HCT116 (cell line): ENCODE measurements at regions of chr14 and their contacts with region 1.

Region 1: DNA sequence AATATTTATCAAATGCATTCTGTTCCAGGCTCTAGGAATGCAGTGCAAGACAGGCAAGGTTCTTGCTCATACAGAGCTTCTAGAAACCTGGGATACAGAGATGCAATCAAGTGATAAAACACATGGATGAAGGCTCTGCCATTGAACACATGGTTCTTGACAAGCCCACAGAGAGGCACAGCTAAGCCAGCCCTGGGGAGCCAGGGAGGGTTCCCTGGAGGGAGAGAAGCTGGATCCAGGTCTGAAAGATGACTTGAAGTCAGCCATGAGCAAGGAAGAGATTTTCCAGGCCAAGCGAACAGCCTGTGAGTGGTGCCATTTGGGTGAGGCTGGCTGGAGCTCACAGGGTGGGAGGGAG is 66.2 kb downstream of the IRF2BPL start:
- DNase-seq: no peak
- ATAC-seq: peak; percentile 12
- H3K4me3 ChIP-seq: peak overlapping the region; percentile 12 to 45
- H3K27ac ChIP-seq: peak overlapping the region; percentile 100
- H3K4me1 ChIP-seq: peaks cover 81 to 87% of the 10 kb centered on the region in 2 experiments
- H3K27me3 ChIP-seq: no peaks in the 10 kb centered on the region
- CTCF ChIP-seq: no peak
- POLR2A ChIP-seq: no peak
- RAD21 ChIP-seq: no peak

Region 2: GRCh38 chr14:76947078-76947837 is 15.0 kb before region 1 on chr14:
- CTCF ChIA-PET with region 1: interaction called, 3 read pairs
- POLR2A ChIA-PET with region 1: interaction called, 30 read pairs
- RAD21 ChIA-PET with region 1: interaction called, 6 to 8 read pairs
- intact Hi-C with region 1: no loop called
- DNase-seq: peak; percentile 87
- ATAC-seq: peak; percentile 88
- H3K4me3 ChIP-seq: peak overlapping the region in 1 of 2 experiments; percentile 35; a peak in 2 of 4 replicates
- H3K27ac ChIP-seq: peak overlapping the region; percentile 97
- H3K4me1 ChIP-seq: peaks cover 67 to 76% of the 10 kb centered on the region in 2 experiments
- H3K27me3 ChIP-seq: no peaks in the 10 kb centered on the region
- CTCF ChIP-seq: peak in 2 of 3 experiments; percentile 42 to 51; a peak in 4 of 6 replicates
- POLR2A ChIP-seq: no peak
- RAD21 ChIP-seq: no peak

Region 3: DNA sequence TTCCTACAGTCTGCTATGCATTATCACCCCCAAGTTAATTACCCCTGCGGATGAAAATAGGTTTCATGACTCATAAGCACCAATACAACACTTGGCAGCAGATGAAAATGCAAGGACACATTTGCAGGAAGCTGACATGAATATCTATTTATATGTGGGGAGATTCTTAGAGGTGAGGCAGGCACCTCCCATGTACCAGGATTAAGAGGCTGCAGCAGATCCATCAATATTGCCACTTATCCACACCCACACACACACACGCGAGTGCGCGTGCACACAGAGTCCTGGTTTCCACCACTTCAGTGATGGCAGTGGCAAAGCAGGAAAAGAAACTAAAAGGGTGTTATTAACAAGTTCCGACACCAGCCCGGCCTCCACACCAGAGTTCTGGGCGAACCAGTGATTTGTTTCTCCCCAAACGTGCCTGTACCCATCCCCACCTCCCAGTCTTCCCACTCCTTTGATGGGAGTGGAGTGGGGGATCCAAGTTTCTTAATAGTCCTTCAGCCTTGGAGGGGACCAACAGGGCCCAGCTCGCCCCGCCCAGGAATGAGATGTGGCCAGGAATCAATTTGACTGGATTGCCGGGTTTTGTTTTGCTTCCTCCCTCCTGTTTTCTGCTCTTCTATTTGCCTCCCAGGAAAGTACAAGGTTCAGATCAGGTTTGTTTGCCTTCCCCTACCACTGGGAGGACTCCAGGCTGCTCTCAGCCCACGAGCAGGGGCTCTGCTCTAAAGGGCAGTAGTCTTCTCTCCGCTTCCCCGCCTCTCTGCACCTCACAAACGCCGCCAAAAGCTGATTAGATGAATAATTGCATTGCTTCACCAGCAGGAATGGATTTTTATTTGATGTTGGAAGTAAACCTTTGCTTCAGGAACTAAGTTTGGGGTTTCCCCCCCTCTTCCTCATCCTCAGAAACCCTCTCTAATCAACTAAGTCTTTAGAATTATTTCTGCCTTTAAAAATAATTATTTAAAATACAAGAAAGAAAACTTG is 61.0 kb after region 1 on chr14:
- CTCF ChIA-PET with region 1: interaction called, 8 read pairs
- POLR2A ChIA-PET with region 1: interaction called, 14 read pairs
- RAD21 ChIA-PET with region 1: interaction called, 7 read pairs
- intact Hi-C with region 1: loop called (anchors 2 kb)
- DNase-seq: no peak
- ATAC-seq: peak; percentile 40
- H3K4me3 ChIP-seq: peak overlapping the region in 1 of 2 experiments; percentile 17; a peak in 2 of 4 replicates
- H3K27ac ChIP-seq: peak overlapping the region; percentile 86
- H3K4me1 ChIP-seq: peaks cover 61 to 69% of the 10 kb centered on the region in 2 experiments
- H3K27me3 ChIP-seq: no peaks in the 10 kb centered on the region
- CTCF ChIP-seq: peak in 2 of 3 experiments; percentile 18 to 33; a peak in 3 of 6 replicates
- POLR2A ChIP-seq: peak; percentile 44
- RAD21 ChIP-seq: no peak

Region 4: GRCh38 chr14:77028384-77029231 is 66.3 kb after region 1 on chr14 and contains the start of gene IRF2BPL:
- CTCF ChIA-PET with region 1: interaction called, 8 read pairs
- POLR2A ChIA-PET with region 1: interaction called, 14 read pairs
- RAD21 ChIA-PET with region 1: interaction called, 7 read pairs
- intact Hi-C with region 1: loop called (anchors 2 kb)
- DNase-seq: peak; percentile 91
- ATAC-seq: peak; percentile 81
- H3K4me3 ChIP-seq: peak within 1 kb of the TSS; percentile 61 to 89
- H3K27ac ChIP-seq: peak within 1 kb of the TSS; percentile 100
- H3K4me1 ChIP-seq: peaks cover 70 to 73% of the 10 kb centered on the region in 2 experiments
- H3K27me3 ChIP-seq: no peaks in the 10 kb centered on the region
- CTCF ChIP-seq: no peak
- POLR2A ChIP-seq: peak; percentile 92
- RAD21 ChIP-seq: no peak
- total RNA-seq, gene IRF2BPL: 74.6 TPM

Region 5: GRCh38 chr14:77053046-77053841 is 91.0 kb after region 1 on chr14:
- CTCF ChIA-PET with region 1: interaction called, 10 read pairs
- POLR2A ChIA-PET with region 1: interaction called, 7 read pairs
- RAD21 ChIA-PET with region 1: interaction called in 1 of 2 experiments, 4 read pairs
- intact Hi-C with region 1: loop called (anchors 1 kb)
- DNase-seq: no peak
- ATAC-seq: peak; percentile 84
- H3K4me3 ChIP-seq: no peak overlapping the region
- H3K27ac ChIP-seq: peak overlapping the region; percentile 50; the same call in 1 of the 2 replicates
- H3K4me1 ChIP-seq: peaks cover 27 to 33% of the 10 kb centered on the region in 2 experiments
- H3K27me3 ChIP-seq: no peaks in the 10 kb centered on the region
- CTCF ChIP-seq: peak in 2 of 3 experiments; percentile 90 to 99; a peak in 4 of 6 replicates
- POLR2A ChIP-seq: no peak
- RAD21 ChIP-seq: no peak